Left ventricle myocardium superior (tissue), 1 donor: ENCODE measurements at regions of chr15 and their contacts with region 1.

Region 1: GRCh38 chr15:80970018-80970658 is 19.5 kb downstream of the MESD start:
- DNase-seq: peak; percentile 53
- ATAC-seq: peak; percentile 71

Region 2: GRCh38 chr15:80455668-80456442 is 514.3 kb before region 1 on chr15:
- intact Hi-C with region 1: loop called (anchors 10 kb)
- DNase-seq: peak; percentile 54
- ATAC-seq: peak; percentile 75

Region 3: DNA sequence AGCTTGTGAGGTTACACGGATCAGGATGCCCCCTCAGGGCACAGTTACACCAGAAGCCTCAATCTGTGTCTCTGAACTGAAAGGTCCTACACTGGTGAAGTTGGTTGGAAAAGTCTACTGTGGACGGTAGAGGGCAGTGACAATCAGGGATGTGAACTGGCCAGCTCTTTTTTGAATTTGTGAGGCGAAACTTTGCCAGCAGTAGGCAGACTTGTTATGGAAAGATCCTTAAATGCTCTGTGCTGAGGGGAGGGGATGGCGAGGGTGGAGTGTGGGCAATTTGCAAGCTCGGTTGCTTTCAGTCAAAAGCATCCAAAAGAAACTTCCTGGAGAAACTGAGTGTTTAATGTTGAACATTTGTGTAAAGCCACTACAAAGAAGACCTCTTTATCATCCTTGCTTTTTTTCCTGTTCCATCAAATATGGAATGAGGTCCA is 402.4 kb before region 1 on chr15:
- intact Hi-C with region 1: loop called (anchors 10 kb)
- DNase-seq: no peak
- ATAC-seq: peak; percentile 86

Region 4: DNA sequence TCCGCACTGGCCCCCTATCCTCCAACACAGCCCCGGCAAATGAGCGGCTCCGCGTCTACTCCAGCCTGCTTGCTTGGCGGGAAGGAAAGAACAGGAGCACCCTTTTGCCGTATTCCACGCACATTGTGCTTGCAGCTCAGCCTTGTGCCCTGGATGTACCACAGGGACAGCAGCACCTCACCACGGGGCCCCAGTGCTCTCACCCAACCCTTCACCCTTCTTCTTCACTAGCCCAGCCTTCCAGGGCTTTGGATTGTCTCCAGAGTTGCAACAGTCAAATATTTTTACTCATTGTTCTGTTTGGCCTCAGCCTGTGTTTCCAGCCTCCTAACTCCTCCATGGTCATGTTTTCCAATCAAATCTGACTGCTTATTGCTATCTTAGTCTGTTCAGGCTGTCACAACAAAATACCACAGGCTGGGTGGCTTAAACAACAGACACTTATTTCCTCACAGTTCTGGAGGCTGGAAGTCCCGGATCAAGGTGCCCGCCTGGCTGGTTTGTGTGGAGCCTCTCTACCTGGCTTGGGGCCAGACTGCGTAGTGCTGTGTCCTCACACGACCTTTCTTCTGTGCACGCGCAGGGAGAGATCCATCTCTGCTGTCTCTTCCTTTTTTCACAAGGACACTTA is 354.3 kb before region 1 on chr15:
- intact Hi-C with region 1: no loop called
- DNase-seq: peak; percentile 81
- ATAC-seq: peak; percentile 80

Region 5: DNA sequence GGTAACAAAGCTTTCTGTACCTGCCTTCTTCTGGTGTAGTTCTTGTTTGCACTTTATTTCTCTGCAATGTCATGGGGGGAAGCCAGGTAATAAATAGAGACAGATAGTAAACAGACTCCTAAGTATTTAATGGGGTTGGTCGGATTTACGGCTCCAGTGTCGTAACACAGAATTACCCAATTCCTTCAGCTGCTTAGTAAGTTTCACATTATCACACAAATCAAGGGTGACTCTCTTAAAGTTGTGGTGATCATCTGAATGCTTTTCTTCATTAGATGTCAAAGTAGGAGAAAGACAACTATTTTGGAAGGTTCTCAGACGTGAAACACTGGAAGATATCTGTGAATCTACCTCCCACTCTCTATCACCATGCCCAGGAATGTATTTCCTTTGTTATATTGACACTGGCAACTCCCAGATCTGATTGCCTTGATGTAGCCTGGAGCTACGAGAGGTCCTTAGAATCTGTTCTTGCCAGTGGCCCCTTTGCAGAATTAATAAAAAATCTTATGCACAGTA is 428.9 kb after region 1 on chr15:
- intact Hi-C with region 1: no loop called
- DNase-seq: no peak
- ATAC-seq: no peak